PC-9 (cell line): ENCODE measurements at regions of chr20 and their contacts with region 1.

Region 1: DNA sequence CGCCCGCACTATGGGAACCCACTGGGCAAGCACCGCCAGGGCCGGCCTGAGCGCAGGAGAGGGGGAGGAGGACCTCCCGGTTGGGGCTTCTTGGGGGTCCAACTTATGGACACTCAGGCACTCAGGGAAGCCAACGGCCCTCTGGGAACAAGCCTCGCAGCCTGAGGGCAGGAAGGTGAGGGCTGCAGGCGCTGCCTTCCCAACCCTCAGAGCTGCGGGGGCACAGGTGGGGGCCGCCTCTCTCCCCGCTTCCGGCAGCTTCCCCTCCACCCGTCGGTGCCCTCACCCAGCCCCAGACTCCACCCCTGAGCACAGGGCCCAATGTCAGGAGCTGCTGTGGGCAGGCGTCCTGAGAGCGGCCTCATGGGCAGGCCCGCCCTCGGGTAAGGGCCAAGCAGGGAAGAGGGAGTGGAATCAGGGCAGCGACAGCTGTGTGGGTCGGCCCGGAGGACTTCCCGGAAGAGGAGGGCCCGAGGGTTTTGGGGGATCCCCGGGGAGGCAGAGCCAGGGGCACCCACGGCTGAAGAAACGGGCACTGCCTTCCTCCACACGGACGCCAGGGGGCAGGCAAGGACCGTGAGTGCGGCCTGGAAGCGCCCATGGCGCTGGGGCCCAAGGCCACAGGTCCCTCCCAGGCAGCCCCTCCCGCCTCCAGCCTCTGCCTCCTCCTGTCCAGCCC is 488 bp upstream of the PTK6 start:
- DNase-seq: peak; percentile 97 to 100
- H3K4me3 ChIP-seq: peak overlapping the region; percentile 66
- H3K27ac ChIP-seq: peak overlapping the region; percentile 90
- H3K4me1 ChIP-seq: peaks cover 52% of the 10 kb centered on the region
- H3K27me3 ChIP-seq: no peaks in the 10 kb centered on the region
- CTCF ChIP-seq: peak; percentile 91

Region 2: GRCh38 chr20:63520504-63520933 is 17.1 kb before region 1 on chr20 and contains the start of gene PPDPF:
- CTCF ChIA-PET with region 1: interaction called, 9 read pairs
- POLR2A ChIA-PET with region 1: interaction called, 14 read pairs
- intact Hi-C with region 1: no loop called
- DNase-seq: peak in 1 of 2 experiments; percentile 83
- H3K4me3 ChIP-seq: peak within 1 kb of the TSS; percentile 99
- H3K27ac ChIP-seq: no peak within 1 kb of the TSS
- H3K4me1 ChIP-seq: peaks cover 7% of the 10 kb centered on the region; the same call in 1 of the 2 replicates
- H3K27me3 ChIP-seq: no peaks in the 10 kb centered on the region
- CTCF ChIP-seq: no peak
- total RNA-seq, gene PPDPF: 243 and 253 TPM in 2 replicates

Region 3: DNA sequence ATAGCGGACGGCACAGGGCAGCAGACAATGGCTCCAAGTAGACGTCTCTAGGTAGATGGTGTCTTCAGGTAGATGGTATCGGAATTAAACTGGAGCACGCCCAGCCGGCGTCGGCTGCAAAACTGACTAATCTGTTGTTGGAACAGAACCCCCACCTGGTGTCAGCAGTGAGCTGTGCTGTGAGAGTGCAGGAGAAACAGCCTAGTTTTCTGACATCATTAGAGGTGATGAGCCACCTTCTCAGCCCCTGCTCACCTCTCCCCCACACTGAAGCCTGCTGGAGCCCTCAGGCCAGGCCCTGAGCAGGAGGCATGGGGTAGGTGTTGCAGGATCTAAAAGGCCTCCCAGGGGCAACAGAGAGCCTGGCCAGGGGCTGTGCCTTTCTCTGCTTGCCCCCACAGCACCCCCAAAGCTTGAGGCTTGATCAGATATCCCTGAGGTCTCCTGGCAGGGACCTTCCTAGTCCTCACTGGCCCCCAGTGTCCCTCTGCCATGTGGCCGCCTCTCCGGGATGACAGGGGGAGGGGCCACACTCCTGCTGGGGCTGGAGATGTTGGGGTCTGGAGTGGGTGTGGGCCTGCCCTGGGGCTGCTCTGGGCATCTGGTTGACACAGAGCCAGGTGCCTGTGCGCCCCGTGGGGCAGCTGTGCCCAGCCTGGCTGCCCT is 43.3 kb after region 1 on chr20:
- CTCF ChIA-PET with region 1: interaction called, 4 read pairs
- POLR2A ChIA-PET with region 1: no interaction called
- intact Hi-C with region 1: loop called (anchors 2 kb)
- DNase-seq: peak; percentile 71 to 75
- H3K4me3 ChIP-seq: no peak overlapping the region
- H3K27ac ChIP-seq: no peak overlapping the region
- H3K4me1 ChIP-seq: peaks cover 7% of the 10 kb centered on the region
- H3K27me3 ChIP-seq: no peaks in the 10 kb centered on the region
- CTCF ChIP-seq: peak; percentile 73

Region 4: DNA sequence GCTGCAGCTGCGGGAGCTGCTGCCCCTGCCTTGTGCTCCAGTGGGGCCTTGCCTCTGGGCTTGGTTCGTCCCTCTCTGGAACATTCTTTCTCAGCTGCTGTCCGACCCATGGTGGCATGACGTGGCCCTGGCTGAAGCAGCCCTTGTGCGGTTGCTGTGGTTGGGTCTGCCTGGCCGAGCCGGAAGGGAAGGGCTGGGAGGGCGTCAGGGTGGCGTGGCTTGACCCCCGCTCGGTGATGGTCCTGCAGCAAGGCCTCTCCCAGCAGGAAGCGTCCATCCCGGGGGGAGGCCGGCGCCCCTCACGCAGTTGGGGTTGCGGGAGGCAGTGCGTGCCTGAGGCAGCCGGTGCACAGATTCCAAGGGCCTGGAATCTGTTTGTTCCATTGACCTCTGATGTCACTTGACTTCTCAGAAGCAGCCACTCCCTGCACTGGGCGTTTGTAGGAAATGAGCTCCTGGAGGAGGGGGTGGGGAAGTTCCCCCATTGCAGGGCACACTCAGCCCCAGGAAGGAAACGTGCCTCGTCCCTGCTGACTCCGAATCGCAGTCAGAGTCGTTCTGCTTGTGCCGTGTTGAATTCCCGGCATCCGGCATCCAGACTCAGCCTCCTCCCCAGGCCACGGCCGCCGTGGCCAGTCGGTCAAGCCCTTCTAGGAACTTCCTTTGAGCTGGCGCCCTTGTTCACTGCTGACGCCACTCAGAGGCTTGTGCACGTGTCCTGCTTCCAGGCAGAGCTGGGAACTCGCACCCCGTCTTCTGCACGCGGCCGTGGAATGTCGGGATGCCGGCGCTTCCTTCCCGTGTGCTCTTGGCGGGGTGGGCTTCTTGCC is 149.0 kb after region 1 on chr20:
- CTCF ChIA-PET with region 1: no interaction called
- POLR2A ChIA-PET with region 1: no interaction called
- intact Hi-C with region 1: loop called (anchors 1 kb)
- DNase-seq: peak in 1 of 2 experiments; percentile 73
- H3K4me3 ChIP-seq: no peak overlapping the region
- H3K27ac ChIP-seq: no peak overlapping the region
- H3K4me1 ChIP-seq: peaks cover 64% of the 10 kb centered on the region
- H3K27me3 ChIP-seq: no peaks in the 10 kb centered on the region
- CTCF ChIP-seq: no peak

Region 5: GRCh38 chr20:63739130-63740069 is 201.7 kb after region 1 on chr20 and contains the start of gene SLC2A4RG:
- CTCF ChIA-PET with region 1: no interaction called
- POLR2A ChIA-PET with region 1: interaction called, 3 read pairs
- intact Hi-C with region 1: loop called (anchors 2 kb)
- DNase-seq: peak in 1 of 2 experiments; percentile 85
- H3K4me3 ChIP-seq: peak within 1 kb of the TSS; percentile 46
- H3K27ac ChIP-seq: 0 out of 2 replicates have a peak within 1 kb of the TSS, but pooled peaks have one; percentile 13
- H3K4me1 ChIP-seq: peaks cover 9% of the 10 kb centered on the region
- H3K27me3 ChIP-seq: no peaks in the 10 kb centered on the region
- CTCF ChIP-seq: no peak
- total RNA-seq, gene SLC2A4RG: 167 and 233 TPM in 2 replicates

Region 6: GRCh38 chr20:63973636-63974402 is 436.2 kb after region 1 on chr20:
- CTCF ChIA-PET with region 1: interaction called, 8 read pairs
- POLR2A ChIA-PET with region 1: no interaction called
- intact Hi-C with region 1: loop called (anchors 1 kb)
- DNase-seq: peak; percentile 70 to 93
- H3K4me3 ChIP-seq: peak overlapping the region; percentile 43; the same call in 1 of the 2 replicates
- H3K27ac ChIP-seq: no peak overlapping the region
- H3K4me1 ChIP-seq: peaks cover 4% of the 10 kb centered on the region
- H3K27me3 ChIP-seq: no peaks in the 10 kb centered on the region
- CTCF ChIP-seq: peak; percentile 99

Region 7: DNA sequence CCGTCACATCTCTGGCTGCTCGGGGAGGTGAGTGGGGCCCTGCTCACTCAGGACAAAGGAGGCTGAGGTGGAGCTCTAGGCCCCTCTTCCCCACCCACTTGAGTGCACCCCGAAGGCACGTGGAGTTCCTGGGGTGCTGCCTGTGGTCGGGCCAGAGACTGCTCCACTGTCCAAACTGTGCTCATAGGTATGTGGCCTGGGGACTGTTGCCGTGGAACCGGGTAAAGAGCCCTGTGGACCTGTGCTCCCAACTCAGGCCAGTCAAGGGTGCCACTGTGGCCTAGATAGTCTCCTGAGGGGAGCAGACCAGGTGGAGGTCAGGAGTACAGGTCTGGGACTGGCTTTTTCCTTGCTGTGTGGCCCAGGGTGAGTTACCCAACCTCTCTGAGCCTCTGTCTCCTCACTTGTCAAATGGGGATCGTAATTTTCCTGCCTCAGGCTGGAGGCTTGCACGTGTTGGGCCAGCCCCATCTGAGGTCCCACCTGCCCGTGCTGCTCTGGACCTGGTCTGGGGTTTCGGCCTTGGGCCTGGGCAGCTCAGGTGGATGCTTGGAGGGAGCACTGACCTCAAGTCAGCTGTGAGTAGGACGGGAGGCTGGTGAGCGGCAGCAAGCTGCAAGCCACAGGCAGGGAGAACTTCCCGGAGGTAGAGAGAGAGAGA is 582.1 kb after region 1 on chr20:
- CTCF ChIA-PET with region 1: interaction called, 3 read pairs
- POLR2A ChIA-PET with region 1: no interaction called
- intact Hi-C with region 1: loop called (anchors 2 kb)
- DNase-seq: peak in 1 of 2 experiments; percentile 28
- H3K4me3 ChIP-seq: no peak overlapping the region
- H3K27ac ChIP-seq: no peak overlapping the region
- H3K4me1 ChIP-seq: no peaks in the 10 kb centered on the region
- H3K27me3 ChIP-seq: peaks cover 55% of the 10 kb centered on the region
- CTCF ChIP-seq: no peak